ENCODE measurements at regions of chr19 and their contacts with region 1.

Region 1: GRCh38 chr19:11035441-11036377 is 53.6 kb upstream of the LDLR start:
- H3K4me3 Mint-ChIP-seq: no peak overlapping the region
- H3K27ac Mint-ChIP-seq: no peak overlapping the region
- H3K4me1 Mint-ChIP-seq: peaks cover 8% of the 10 kb centered on the region
- H3K27me3 Mint-ChIP-seq: no peaks in the 10 kb centered on the region

Region 2: GRCh38 chr19:10998045-10998533 is 37.6 kb before region 1 on chr19:
- intact Hi-C with region 1: no loop called
- H3K4me3 Mint-ChIP-seq: no peak overlapping the region
- H3K27ac Mint-ChIP-seq: peak overlapping the region; percentile 4
- H3K4me1 Mint-ChIP-seq: peaks cover 12% of the 10 kb centered on the region
- H3K27me3 Mint-ChIP-seq: no peaks in the 10 kb centered on the region

Region 3: GRCh38 chr19:11111117-11111774 is 75.5 kb after region 1 on chr19:
- intact Hi-C with region 1: loop called (anchors 5 kb)
- H3K4me3 Mint-ChIP-seq: no peak overlapping the region
- H3K27ac Mint-ChIP-seq: no peak overlapping the region
- H3K4me1 Mint-ChIP-seq: no peaks in the 10 kb centered on the region
- H3K27me3 Mint-ChIP-seq: no peaks in the 10 kb centered on the region

Region 4: GRCh38 chr19:11130824-11131455 is 95.2 kb after region 1 on chr19:
- intact Hi-C with region 1: loop called (anchors 1 kb)
- H3K4me3 Mint-ChIP-seq: no peak overlapping the region
- H3K27ac Mint-ChIP-seq: no peak overlapping the region
- H3K4me1 Mint-ChIP-seq: no peaks in the 10 kb centered on the region
- H3K27me3 Mint-ChIP-seq: no peaks in the 10 kb centered on the region

Region 5: GRCh38 chr19:11203194-11204075 is 167.7 kb after region 1 on chr19:
- intact Hi-C with region 1: loop called (anchors 5 kb)
- H3K4me3 Mint-ChIP-seq: no peak overlapping the region
- H3K27ac Mint-ChIP-seq: no peak overlapping the region
- H3K4me1 Mint-ChIP-seq: peaks cover 18% of the 10 kb centered on the region
- H3K27me3 Mint-ChIP-seq: peaks cover 23% of the 10 kb centered on the region

Measured in dendritic cell treated with granulocyte-macrophage colony-stimulating factor and Interleukin-4, amounts not matched to agents 40 ng/mL and 50 ng/mL, for 4 days (primary cell).